ENCODE measurements at regions of chr1 and their contacts with region 1.

Region 1: GRCh38 chr1:223133824-223134435 is 9.1 kb downstream of the TLR5 start:
- DNase-seq: peak; percentile 59 to 85 (median 76)
- H3K4me3 ChIP-seq: peak overlapping the region; percentile 22 to 66 (median 49)
- H3K27ac ChIP-seq: peak overlapping the region in 10 of 59 donors; percentile 17 to 69 (median 32)
- H3K27me3 ChIP-seq: peaks cover 0 to 60% (median 3%) of the 10 kb centered on the region in 45 donors
- CTCF ChIP-seq: peak; percentile 13 to 99 (median 95)

Region 2: DNA sequence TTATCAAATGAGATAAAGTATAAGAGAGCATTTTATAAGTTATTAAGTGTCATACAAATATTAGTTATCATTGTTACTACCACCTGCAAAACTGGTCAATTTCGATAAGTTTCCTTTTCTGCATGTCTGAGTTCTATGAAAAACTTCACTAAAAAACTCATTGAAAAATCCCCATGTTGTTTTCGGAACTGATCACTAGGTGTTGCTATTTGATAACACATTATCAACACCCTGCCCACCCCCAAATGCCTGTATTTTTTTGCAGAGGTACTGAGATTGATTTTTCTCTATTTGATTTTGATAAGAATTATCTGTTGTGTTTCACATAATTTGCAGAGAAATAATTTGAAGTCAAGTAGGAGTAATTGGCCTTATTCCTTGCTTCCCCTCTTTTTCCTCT is 341.2 kb before region 1 on chr1:
- intact Hi-C with region 1: loop called in 1 of 2 experiments (anchors 5 kb)
- DNase-seq: no peak
- H3K4me3 ChIP-seq: no peak overlapping the region
- H3K27ac ChIP-seq: no peak overlapping the region
- H3K27me3 ChIP-seq: peaks cover 0 to 12% (median 0%) of the 10 kb centered on the region in 45 donors
- CTCF ChIP-seq: peak; percentile 26 to 90 (median 68)

Region 3: GRCh38 chr1:223068900-223069665 is 64.8 kb before region 1 on chr1:
- intact Hi-C with region 1: no loop called
- DNase-seq: no peak
- H3K4me3 ChIP-seq: no peak overlapping the region
- H3K27ac ChIP-seq: peak overlapping the region in 3 of 59 donors; percentile 2 to 9 (median 8)
- H3K27me3 ChIP-seq: peaks cover 0 to 49% (median 0%) of the 10 kb centered on the region in 45 donors
- CTCF ChIP-seq: no peak

Region 4: DNA sequence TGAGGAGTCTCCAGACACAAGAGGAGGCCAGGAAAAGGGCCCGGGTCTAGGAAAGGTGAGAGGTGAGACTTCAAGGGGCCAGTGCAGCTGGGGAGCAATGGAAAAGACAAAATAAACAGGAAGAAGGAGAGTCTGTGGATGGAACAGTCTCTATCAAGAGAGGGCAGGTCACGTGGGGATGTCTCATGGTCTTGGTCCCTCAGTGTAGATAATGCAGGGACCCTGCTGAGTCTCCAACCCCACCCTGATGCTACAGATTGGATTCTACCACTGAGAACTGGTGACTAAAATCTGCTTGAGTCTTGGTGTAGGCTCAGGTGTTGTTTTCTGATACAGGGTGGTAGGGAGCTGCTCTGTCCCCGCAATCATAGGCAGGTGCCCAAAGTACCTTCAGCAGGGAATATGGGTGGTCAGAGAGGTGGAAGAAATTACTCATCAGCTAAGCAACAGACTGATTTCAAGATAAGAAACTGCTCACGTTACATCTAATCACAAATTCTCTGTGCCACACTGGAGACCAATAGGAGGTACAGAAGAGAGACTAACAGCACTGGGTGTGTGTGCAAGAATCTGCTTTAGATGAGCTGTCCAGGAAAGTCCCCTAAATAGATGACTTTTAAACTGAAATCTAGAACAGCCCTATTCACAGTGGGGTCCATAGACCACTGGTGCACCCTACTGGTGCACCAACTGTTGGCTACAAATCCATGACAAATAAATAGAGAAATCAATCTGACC is 110.6 kb after region 1 on chr1:
- intact Hi-C with region 1: loop called in 1 of 2 experiments (anchors 2 kb)
- DNase-seq: no peak
- H3K4me3 ChIP-seq: no peak overlapping the region
- H3K27ac ChIP-seq: no peak overlapping the region
- H3K27me3 ChIP-seq: peaks cover 0 to 3% (median 0%) of the 10 kb centered on the region in 45 donors
- CTCF ChIP-seq: peak in 27 of 56 donors; percentile 7 to 54 (median 19)

Region 5: DNA sequence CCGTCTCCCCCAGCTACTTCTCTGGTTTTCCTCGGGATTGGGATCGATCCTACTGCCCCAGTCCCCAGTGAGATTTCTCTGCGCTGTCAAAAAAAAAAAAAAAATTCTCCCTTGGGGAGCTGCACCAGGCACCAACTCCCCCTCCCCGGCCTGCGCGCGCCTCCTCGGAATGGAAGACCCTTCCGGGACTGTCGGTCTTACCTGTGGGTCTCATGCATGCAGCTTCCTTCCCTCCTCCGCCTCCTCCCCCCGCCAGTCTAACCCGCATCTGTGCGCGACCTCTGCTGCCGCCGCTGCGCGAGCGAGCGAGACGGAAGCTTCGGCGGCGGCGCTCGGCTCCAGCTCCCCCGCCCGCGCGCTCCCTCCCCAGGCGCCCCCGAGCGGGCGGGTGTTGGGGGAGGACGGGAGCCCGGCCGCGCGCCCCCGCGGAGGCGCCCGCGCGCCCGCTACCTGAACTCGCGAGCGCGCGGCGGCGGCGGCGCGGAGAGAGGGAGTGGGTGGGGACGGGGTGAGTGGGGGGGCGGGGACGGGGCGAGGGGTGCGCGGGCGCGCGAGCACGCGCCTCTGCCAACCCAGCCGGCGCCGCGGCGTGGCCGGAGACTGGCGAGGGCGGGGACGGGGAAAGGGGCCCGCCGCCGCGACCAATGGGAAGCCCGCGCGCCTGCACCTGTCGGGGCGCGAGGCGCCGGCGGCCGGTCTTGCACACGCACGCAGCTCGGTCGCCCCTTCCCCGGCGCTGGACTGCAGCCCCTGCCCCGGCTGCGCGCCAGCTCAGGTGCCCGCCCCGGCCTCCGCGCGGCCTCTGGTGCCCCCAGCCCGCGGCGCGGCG is 230.1 kb after region 1 on chr1 and contains the start of gene SUSD4:
- intact Hi-C with region 1: loop called in 1 of 2 experiments (anchors 5 kb)
- DNase-seq: peak in 8 of 10 donors; percentile 24 to 82 (median 48)
- H3K4me3 ChIP-seq: peak within 1 kb of the TSS; percentile 50 to 82 (median 67)
- H3K27ac ChIP-seq: peak within 1 kb of the TSS in 48 of 59 donors; percentile 4 to 82 (median 56)
- H3K27me3 ChIP-seq: no peaks in the 10 kb centered on the region
- CTCF ChIP-seq: no peak
- total RNA-seq, gene SUSD4: 21.6 to 96.9 (median 65.8) TPM

Region 6: GRCh38 chr1:223683586-223684487 is 549.9 kb after region 1 on chr1:
- intact Hi-C with region 1: loop called (anchors 5 kb)
- DNase-seq: peak in 8 of 10 donors; percentile 38 to 77 (median 63)
- H3K4me3 ChIP-seq: no peak overlapping the region
- H3K27ac ChIP-seq: no peak overlapping the region
- H3K27me3 ChIP-seq: peaks cover 0 to 19% (median 0%) of the 10 kb centered on the region in 45 donors
- CTCF ChIP-seq: peak in 55 of 56 donors; percentile 44 to 82 (median 64)

Region 7: GRCh38 chr1:224182866-224183590 is 1049.1 kb after region 1 on chr1 and contains the start of gene DEGS1:
- intact Hi-C with region 1: no loop called
- DNase-seq: peak; percentile 66 to 90 (median 79)
- H3K4me3 ChIP-seq: peak within 1 kb of the TSS; percentile 61 to 99 (median 93)
- H3K27ac ChIP-seq: peak within 1 kb of the TSS; percentile 42 to 98 (median 93)
- H3K27me3 ChIP-seq: no peaks in the 10 kb centered on the region
- CTCF ChIP-seq: peak in 25 of 56 donors; percentile 5 to 44 (median 18)
- total RNA-seq, gene DEGS1: 34.7 to 73.1 (median 54.6) TPM